Heart right ventricle (tissue), 16 donors: ENCODE measurements at regions of chr9 and their contacts with region 1.

Region 1: DNA sequence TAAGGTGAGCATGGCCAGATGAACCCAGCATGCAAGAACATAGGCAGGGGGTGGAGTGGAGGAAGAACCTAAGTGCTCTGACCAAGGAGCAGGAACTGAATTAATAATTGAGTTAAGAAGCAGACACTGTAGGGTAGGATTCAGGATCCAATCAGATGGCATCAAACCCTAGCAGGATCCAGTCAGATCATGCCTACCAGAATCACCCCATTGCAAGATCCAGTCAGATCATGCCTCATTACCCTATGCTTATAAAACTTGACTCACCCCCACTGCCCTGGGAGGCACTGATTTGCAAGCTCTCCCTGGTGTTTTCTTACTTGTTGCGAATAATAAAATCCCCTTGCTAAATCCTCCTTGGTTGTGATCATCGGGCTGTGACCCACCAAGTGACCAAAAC is 19.7 kb downstream of the TUSC1 start:
- DNase-seq: no peak
- ATAC-seq: no peak
- H3K4me3 ChIP-seq: no peak overlapping the region
- H3K27ac ChIP-seq: no peak overlapping the region
- H3K4me1 ChIP-seq: no peaks in the 10 kb centered on the region
- H3K27me3 ChIP-seq: no peaks in the 10 kb centered on the region
- CTCF ChIP-seq: no peak

Region 2: DNA sequence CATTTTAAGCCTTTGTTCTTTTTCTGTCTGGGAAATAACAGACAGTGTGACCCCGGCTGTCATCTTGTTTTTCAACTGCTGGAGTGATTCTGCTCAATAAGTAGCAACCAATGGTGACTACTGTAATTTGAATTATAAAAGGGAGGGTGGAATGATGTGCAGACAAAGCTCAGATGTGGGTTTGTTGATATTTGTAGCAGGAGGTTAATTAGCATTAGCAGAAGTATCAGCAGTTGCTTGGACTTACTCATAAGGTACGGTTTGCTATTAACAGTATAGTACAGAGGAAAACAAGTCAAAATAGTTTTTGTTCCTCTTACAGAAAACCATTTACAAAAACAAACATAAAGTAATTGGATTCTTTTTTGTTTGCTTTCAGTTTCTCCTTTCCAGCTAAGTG is 120.8 kb before region 1 on chr9:
- intact Hi-C with region 1: no loop called
- DNase-seq: no peak
- ATAC-seq: no peak
- H3K4me3 ChIP-seq: no peak overlapping the region
- H3K27ac ChIP-seq: no peak overlapping the region
- H3K4me1 ChIP-seq: no peaks in the 10 kb centered on the region
- H3K27me3 ChIP-seq: no peaks in the 10 kb centered on the region
- CTCF ChIP-seq: no peak

Region 3: GRCh38 chr9:25681266-25681665 is 22.7 kb after region 1 on chr9:
- intact Hi-C with region 1: no loop called
- DNase-seq: no peak
- ATAC-seq: no peak
- H3K4me3 ChIP-seq: no peak overlapping the region
- H3K27ac ChIP-seq: peak overlapping the region in 1 of 10 donors; percentile 22
- H3K4me1 ChIP-seq: peaks cover 0 to 18% (median 13%) of the 10 kb centered on the region in 9 donors
- H3K27me3 ChIP-seq: no peaks in the 10 kb centered on the region
- CTCF ChIP-seq: no peak

Region 4: DNA sequence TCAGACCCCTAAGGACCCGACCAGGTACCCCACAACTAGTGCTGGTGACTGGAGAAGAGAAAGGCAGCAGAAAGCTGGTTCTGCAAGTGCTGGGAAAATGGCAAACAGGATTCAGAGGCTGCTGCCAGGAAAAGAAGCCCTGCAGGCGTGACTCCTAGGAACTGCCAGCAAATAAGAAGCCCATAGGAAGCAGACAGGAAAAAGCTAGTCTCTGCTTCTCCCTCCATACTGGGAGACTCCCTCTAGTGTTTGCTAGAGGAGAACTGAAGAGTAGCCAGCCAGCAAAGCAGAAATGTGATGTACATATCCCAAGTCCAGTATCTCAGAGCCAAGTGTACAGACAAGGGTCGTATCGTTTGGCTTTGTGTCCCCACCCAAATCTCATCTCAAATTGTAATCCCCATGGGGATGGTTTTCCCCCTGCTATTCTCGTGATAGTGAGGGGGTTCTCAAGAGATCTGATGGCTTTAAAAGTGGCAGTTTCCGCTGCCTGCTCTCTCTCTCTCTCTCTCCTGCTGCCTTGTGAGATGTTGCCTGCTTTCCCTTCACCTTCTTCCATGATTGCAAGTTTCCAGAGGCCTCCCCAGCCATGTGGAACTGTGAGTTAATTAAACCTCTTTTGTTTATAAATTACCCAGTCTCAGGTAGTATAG is 57.8 kb after region 1 on chr9:
- intact Hi-C with region 1: loop called in 1 of 10 experiments (anchors 10 kb)
- DNase-seq: peak in 1 of 2 donors; percentile 4
- ATAC-seq: peak in 4 of 8 donors; percentile 29 to 81 (median 53)
- H3K4me3 ChIP-seq: no peak overlapping the region
- H3K27ac ChIP-seq: no peak overlapping the region
- H3K4me1 ChIP-seq: peaks cover 0 to 2% (median 0%) of the 10 kb centered on the region in 9 donors
- H3K27me3 ChIP-seq: no peaks in the 10 kb centered on the region
- CTCF ChIP-seq: peak; percentile 8 to 55 (median 44)

Region 5: GRCh38 chr9:26157411-26157810 is 498.8 kb after region 1 on chr9:
- intact Hi-C with region 1: no loop called
- DNase-seq: no peak
- ATAC-seq: no peak
- H3K4me3 ChIP-seq: no peak overlapping the region
- H3K27ac ChIP-seq: no peak overlapping the region
- H3K4me1 ChIP-seq: no peaks in the 10 kb centered on the region
- H3K27me3 ChIP-seq: no peaks in the 10 kb centered on the region
- CTCF ChIP-seq: no peak